Activated CD4-positive, alpha-beta T cell treated with anti-CD3 and anti-CD28 coated beads, Interleukin-2, amount 10 ng/mL, durations not matched to agents 24 days and 14 days (primary cell): ENCODE measurements at regions of chr15 and their contacts with region 1.

Region 1: GRCh38 chr15:71349736-71350526 is 234.7 kb downstream of the THSD4 start:
- DNase-seq: no peak
- H3K4me3 Mint-ChIP-seq: no peak overlapping the region
- H3K27ac Mint-ChIP-seq: no peak overlapping the region
- H3K4me1 Mint-ChIP-seq: no peaks in the 10 kb centered on the region
- H3K27me3 Mint-ChIP-seq: no peaks in the 10 kb centered on the region

Region 2: DNA sequence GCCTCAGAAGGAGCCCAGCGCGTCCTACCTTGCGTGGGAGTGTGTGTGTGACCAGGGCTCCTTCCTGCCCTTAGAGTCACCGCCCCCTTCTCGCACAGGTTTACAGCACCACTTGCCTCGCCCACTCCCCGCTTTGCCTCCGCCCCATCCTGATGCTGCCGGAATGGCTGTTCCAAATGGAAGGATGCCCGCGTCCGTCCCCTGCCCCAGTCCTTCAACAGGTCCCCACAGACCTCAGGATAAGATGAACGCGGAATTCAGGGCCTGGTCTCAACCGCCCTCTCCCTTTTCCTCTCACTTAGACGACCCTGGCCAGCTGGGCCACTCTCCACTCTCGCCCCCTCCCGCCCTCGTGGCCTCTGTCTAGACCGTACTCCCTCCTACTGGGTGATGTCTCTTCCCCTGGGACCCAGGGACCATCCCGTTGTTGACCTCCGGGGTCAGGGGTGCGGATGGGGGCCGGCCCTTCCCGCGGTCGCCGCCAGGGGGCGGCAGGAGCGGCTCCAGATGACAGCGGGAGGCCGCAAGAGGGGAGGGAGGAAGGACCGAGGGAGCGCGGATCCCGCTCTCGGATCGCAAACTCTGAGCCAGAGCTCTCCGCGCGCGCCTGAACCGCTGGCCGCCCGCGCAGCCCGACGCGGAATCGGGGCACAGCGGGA is 234.9 kb before region 1 on chr15 and contains the start of gene THSD4:
- intact Hi-C with region 1: loop called (anchors 10 kb)
- DNase-seq: peak; percentile 89
- H3K4me3 Mint-ChIP-seq: peak within 1 kb of the TSS; percentile 78
- H3K27ac Mint-ChIP-seq: no peak within 1 kb of the TSS
- H3K4me1 Mint-ChIP-seq: peaks cover 8% of the 10 kb centered on the region
- H3K27me3 Mint-ChIP-seq: peaks cover 38% of the 10 kb centered on the region
- total RNA-seq, gene THSD4: not detected in 2 replicates